ENCODE measurements at regions of chr11 and their contacts with region 1.

Region 1: GRCh38 chr11:114280696-114281095 is 15.5 kb upstream of the NNMT start:
- DNase-seq: peak; percentile 85
- ATAC-seq: peak; percentile 97
- H3K4me3 ChIP-seq: no peak overlapping the region
- H3K27ac ChIP-seq: peak overlapping the region; percentile 44
- H3K4me1 ChIP-seq: peaks cover 15% of the 10 kb centered on the region
- H3K27me3 ChIP-seq: peaks cover 2% of the 10 kb centered on the region; the same call in 1 of the 2 replicates
- CTCF ChIP-seq: peak; percentile 93
- POLR2A ChIP-seq: peak; percentile 58
- RAD21 ChIP-seq: peak; percentile 97

Region 2: DNA sequence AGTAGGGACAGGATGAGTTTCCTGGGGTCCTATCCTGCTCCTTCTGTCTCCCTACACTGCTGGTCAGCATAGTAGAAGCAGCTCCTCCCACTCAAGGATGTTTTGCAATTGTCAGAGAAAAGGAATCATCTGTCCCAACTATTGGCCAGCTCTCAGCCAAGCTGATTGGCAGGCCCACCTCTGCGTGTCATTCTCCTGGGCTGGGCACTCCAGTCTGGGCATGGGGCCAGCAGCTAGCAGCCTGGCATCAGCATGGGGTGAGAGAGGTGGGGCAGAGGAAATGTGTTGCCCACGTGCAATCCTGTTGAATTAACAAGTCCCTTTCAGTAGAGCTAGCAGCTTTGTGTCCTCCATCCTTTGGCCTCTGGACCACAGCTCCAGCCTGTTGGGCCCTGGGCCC is 879.0 kb before region 1 on chr11:
- CTCF ChIA-PET with region 1: no interaction called
- POLR2A ChIA-PET with region 1: no interaction called
- dilution Hi-C with region 1: no loop called
- in situ Hi-C with region 1: no loop called
- intact Hi-C with region 1: no loop called
- DNase-seq: no peak
- ATAC-seq: no peak
- H3K4me3 ChIP-seq: no peak overlapping the region
- H3K27ac ChIP-seq: no peak overlapping the region
- H3K4me1 ChIP-seq: no peaks in the 10 kb centered on the region
- H3K27me3 ChIP-seq: peaks cover 21% of the 10 kb centered on the region
- CTCF ChIP-seq: no peak
- POLR2A ChIP-seq: no peak
- RAD21 ChIP-seq: no peak

Region 3: GRCh38 chr11:114001416-114001815 is 279.3 kb before region 1 on chr11:
- CTCF ChIA-PET with region 1: no interaction called
- POLR2A ChIA-PET with region 1: no interaction called
- dilution Hi-C with region 1: no loop called
- in situ Hi-C with region 1: no loop called
- intact Hi-C with region 1: no loop called
- DNase-seq: no peak
- ATAC-seq: no peak
- H3K4me3 ChIP-seq: no peak overlapping the region
- H3K27ac ChIP-seq: no peak overlapping the region
- H3K4me1 ChIP-seq: no peaks in the 10 kb centered on the region
- H3K27me3 ChIP-seq: no peaks in the 10 kb centered on the region
- CTCF ChIP-seq: no peak
- POLR2A ChIP-seq: no peak
- RAD21 ChIP-seq: no peak

Region 4: GRCh38 chr11:114340311-114341131 is 59.8 kb after region 1 on chr11:
- CTCF ChIA-PET with region 1: interaction called, 9 read pairs
- POLR2A ChIA-PET with region 1: no interaction called
- dilution Hi-C with region 1: no loop called
- in situ Hi-C with region 1: no loop called
- intact Hi-C with region 1: loop called (anchors 1 kb)
- DNase-seq: peak; percentile 82
- ATAC-seq: peak; percentile 97
- H3K4me3 ChIP-seq: no peak overlapping the region
- H3K27ac ChIP-seq: no peak overlapping the region
- H3K4me1 ChIP-seq: no peaks in the 10 kb centered on the region
- H3K27me3 ChIP-seq: no peaks in the 10 kb centered on the region; the same call in 1 of the 2 replicates
- CTCF ChIP-seq: peak; percentile 86
- POLR2A ChIP-seq: no peak
- RAD21 ChIP-seq: peak; percentile 95

Region 5: GRCh38 chr11:114439229-114440120 is 158.8 kb after region 1 on chr11 and contains the start of gene REXO2:
- CTCF ChIA-PET with region 1: no interaction called
- POLR2A ChIA-PET with region 1: no interaction called
- dilution Hi-C with region 1: no loop called
- in situ Hi-C with region 1: no loop called
- intact Hi-C with region 1: loop called (anchors 2 kb)
- DNase-seq: peak; percentile 93
- ATAC-seq: peak; percentile 93
- H3K4me3 ChIP-seq: peak within 1 kb of the TSS; percentile 89
- H3K27ac ChIP-seq: peak within 1 kb of the TSS; percentile 90
- H3K4me1 ChIP-seq: peaks cover 5% of the 10 kb centered on the region
- H3K27me3 ChIP-seq: no peaks in the 10 kb centered on the region
- CTCF ChIP-seq: peak; percentile 51
- POLR2A ChIP-seq: peak; percentile 58
- RAD21 ChIP-seq: peak; percentile 37; the same call in 1 of the 2 replicates
- total RNA-seq, gene REXO2: 179 and 276 TPM in 2 replicates

Region 6: DNA sequence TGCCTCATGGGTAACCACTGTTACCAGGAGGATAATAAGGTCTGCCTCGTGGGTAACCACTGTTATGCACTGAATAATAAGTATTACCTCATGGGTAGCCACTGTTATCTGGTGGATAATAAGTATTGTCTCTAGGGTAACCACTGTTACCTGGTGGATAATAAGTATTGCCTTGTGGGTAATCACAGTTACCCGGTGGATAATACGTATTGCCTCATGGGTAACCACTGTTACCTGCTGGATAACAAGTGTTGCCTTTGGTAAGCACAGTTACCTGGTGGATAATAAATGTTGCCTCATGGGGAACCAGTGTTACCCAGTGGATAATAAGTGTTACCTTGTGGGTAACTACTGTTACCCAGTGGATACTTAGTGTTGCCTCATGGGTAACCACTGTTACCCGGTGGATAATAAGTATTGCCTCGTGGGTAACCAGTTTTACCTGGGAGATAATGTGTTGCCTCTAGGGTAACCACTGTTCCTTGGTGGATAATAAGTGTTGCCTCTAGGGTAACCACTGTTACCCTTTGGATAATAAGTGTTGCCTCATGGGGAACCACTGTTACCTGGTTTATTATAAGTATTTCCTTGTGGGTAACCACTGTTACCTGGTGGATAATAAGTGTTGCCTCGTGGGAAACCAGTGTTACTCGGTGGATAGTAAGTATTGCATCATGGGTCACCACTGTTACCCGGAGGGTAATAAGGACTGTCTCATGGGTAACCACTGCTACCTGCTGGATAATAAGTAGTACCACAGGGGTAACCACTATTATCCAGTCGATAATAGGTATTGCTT is 325.5 kb after region 1 on chr11:
- CTCF ChIA-PET with region 1: no interaction called
- POLR2A ChIA-PET with region 1: no interaction called
- dilution Hi-C with region 1: no loop called
- in situ Hi-C with region 1: no loop called
- intact Hi-C with region 1: loop called (anchors 5 kb)
- DNase-seq: peak; percentile 3
- ATAC-seq: no peak
- H3K4me3 ChIP-seq: no peak overlapping the region
- H3K27ac ChIP-seq: no peak overlapping the region
- H3K4me1 ChIP-seq: no peaks in the 10 kb centered on the region
- H3K27me3 ChIP-seq: no peaks in the 10 kb centered on the region
- CTCF ChIP-seq: 0 out of 2 replicates have a peak, but pooled peaks have one; percentile 15
- POLR2A ChIP-seq: no peak
- RAD21 ChIP-seq: peak; percentile 22

Region 7: GRCh38 chr11:114762408-114762807 is 481.7 kb after region 1 on chr11:
- CTCF ChIA-PET with region 1: no interaction called
- POLR2A ChIA-PET with region 1: no interaction called
- dilution Hi-C with region 1: no loop called
- in situ Hi-C with region 1: no loop called
- intact Hi-C with region 1: loop called (anchors 1 kb)
- DNase-seq: peak; percentile 54
- ATAC-seq: peak; percentile 91
- H3K4me3 ChIP-seq: no peak overlapping the region
- H3K27ac ChIP-seq: no peak overlapping the region
- H3K4me1 ChIP-seq: no peaks in the 10 kb centered on the region
- H3K27me3 ChIP-seq: no peaks in the 10 kb centered on the region
- CTCF ChIP-seq: peak; percentile 78
- POLR2A ChIP-seq: no peak
- RAD21 ChIP-seq: peak; percentile 80